MCF 10A (cell line): ENCODE measurements at regions of chr3 and their contacts with region 1.

Region 1: GRCh38 chr3:173045770-173046382 is 95.2 kb downstream of the SPATA16 start:
- DNase-seq: no peak
- H3K4me3 Mint-ChIP-seq: no peak overlapping the region
- H3K27ac Mint-ChIP-seq: no peak overlapping the region
- H3K4me1 Mint-ChIP-seq: no peaks in the 10 kb centered on the region
- H3K27me3 Mint-ChIP-seq: peaks cover 50% of the 10 kb centered on the region
- CTCF ChIP-seq: peak; percentile 27

Region 2: DNA sequence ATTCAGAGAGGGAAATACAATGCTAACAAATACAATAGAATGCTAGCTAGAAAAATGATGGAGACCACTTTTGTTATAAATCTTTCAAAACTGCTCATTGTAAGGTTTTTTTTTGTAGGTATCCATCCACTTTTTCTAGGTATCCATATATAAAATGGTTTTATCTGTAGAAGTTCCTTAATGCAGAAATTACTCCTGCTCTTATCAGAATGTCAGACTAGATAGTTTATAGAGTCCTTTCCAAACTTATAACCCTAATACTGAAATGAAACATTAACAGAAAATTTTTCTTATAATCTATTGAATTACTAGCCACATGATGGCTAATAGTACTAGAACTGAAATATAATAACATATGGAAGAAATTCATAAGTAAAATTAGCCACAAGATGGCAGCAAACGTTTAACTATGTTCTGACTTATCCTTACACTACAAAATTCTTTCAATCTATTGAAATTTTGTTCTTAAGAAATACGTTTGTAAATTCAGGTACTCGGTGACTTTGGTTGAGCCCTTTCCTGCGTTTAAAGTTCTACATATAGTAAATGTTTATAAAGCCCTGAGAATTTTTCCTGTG is 236.8 kb before region 1 on chr3:
- CTCF ChIA-PET with region 1: interaction called, 11 read pairs
- POLR2A ChIA-PET with region 1: no interaction called
- intact Hi-C with region 1: loop called (anchors 1 kb)
- DNase-seq: peak; percentile 48
- H3K4me3 Mint-ChIP-seq: no peak overlapping the region
- H3K27ac Mint-ChIP-seq: no peak overlapping the region
- H3K4me1 Mint-ChIP-seq: no peaks in the 10 kb centered on the region
- H3K27me3 Mint-ChIP-seq: no peaks in the 10 kb centered on the region
- CTCF ChIP-seq: no peak

Region 3: GRCh38 chr3:172836390-172836997 is 209.4 kb before region 1 on chr3:
- CTCF ChIA-PET with region 1: interaction called, 10 read pairs
- POLR2A ChIA-PET with region 1: no interaction called
- intact Hi-C with region 1: loop called (anchors 1 kb)
- DNase-seq: peak; percentile 76
- H3K4me3 Mint-ChIP-seq: no peak overlapping the region
- H3K27ac Mint-ChIP-seq: no peak overlapping the region
- H3K4me1 Mint-ChIP-seq: no peaks in the 10 kb centered on the region
- H3K27me3 Mint-ChIP-seq: peaks cover 63% of the 10 kb centered on the region
- CTCF ChIP-seq: peak; percentile 56

Region 4: DNA sequence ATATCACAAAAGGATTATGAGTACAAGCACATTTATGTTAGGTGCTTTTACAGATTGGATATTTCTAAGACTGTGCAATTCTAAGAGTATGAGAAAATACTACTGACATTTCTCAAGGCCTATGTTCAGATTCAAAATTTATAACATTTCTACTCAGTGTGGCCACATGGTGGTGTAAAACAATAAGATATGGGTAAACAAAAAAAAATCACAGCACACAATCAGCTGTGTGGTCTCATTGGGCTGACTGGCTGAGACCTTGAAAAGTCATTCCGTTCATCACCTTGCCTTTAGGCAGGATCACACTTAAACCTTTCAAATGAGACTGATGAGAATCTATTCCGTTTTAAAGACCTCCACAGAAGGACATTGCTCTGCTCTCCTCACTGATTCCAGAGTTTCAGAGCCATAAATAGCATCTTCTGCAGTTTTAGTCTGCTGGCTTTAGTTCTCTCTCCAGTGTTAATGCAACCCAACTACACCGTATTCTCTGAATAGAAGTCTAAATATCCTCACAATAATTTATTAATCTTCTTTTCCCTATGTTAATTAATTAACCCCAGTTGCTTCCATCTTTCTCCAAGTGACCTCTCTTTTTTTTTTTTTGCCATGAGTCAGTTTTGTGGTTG is 63.0 kb before region 1 on chr3:
- CTCF ChIA-PET with region 1: interaction called, 3 read pairs
- POLR2A ChIA-PET with region 1: no interaction called
- intact Hi-C with region 1: loop called (anchors 1 kb)
- DNase-seq: peak; percentile 4
- H3K4me3 Mint-ChIP-seq: no peak overlapping the region
- H3K27ac Mint-ChIP-seq: no peak overlapping the region
- H3K4me1 Mint-ChIP-seq: no peaks in the 10 kb centered on the region
- H3K27me3 Mint-ChIP-seq: peaks cover 76% of the 10 kb centered on the region
- CTCF ChIP-seq: peak; percentile 11